AG04450 (cell line): ENCODE measurements at regions of chr5 and their contacts with region 1.

Region 1: GRCh38 chr5:17189381-17190036 is 27.9 kb upstream of the BASP1 start:
- DNase-seq: peak; percentile 58
- H3K4me3 ChIP-seq: no peak overlapping the region
- H3K27ac ChIP-seq: no peak overlapping the region
- H3K27me3 ChIP-seq: no peaks in the 10 kb centered on the region
- CTCF ChIP-seq: peak; percentile 89

Region 2: DNA sequence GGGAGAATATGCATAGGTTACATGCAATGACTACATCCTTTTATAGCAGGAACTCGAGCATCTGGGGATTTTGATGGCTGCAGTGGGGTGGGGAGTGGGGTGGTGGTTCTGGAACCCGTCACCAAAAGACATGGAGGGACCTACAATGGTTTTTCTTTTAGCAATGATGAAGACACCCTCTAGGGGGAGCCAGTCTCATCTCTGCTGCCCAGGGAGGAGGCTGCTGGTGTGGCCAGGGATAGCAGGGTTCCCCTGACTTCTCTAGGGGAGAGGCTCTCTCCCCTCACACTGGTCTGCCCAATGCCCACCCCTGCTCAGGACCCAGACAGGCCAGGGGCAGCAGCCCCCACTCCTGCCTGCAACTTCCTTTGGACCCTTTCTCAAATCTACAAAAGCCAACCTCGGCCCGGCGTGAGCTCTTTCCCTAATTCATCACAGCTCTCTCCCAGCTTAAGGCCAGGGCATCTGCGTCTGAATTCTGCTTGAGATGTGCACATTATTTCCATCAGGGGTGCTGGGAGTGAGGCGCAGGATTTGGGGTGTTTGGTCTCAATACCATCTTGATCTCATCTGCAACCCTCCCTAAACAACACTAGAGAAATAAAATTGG is 499.2 kb before region 1 on chr5:
- CTCF ChIA-PET with region 1: interaction called, 15 read pairs
- POLR2A ChIA-PET with region 1: no interaction called
- DNase-seq: no peak
- H3K4me3 ChIP-seq: no peak overlapping the region
- H3K27ac ChIP-seq: no peak overlapping the region
- H3K27me3 ChIP-seq: no peaks in the 10 kb centered on the region
- CTCF ChIP-seq: peak; percentile 84

Region 3: DNA sequence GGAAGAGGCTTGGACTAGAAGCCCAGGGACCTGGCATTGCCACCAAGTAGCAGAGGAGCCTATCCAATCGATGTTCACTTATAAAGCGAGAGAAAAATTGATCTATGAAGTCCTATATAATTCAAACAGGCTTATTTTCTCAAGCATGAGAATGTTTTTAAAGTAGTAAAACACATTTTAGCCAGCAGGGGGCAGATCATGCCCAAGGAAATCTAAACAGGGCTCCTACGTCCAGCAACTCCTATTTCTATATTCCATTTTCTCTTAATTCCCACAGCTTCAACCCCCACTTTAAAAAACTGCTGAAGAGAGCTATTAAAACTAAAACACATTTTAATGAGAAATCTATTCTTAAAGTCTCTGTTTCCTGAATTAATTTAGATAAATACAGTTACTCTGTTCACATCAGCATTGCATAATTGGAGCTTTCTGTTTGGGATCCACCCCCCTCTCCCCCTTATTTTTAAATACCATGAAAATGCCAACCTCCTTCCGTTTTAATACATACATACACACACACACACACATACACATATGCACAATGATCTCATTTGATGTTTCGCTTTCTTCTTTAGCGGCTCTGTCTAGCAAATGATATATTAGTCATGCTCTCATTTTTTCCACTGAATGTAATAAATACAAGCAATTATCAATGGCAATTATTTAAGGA is 398.3 kb before region 1 on chr5:
- CTCF ChIA-PET with region 1: interaction called, 40 read pairs
- POLR2A ChIA-PET with region 1: no interaction called
- DNase-seq: no peak
- H3K4me3 ChIP-seq: no peak overlapping the region
- H3K27ac ChIP-seq: no peak overlapping the region
- H3K27me3 ChIP-seq: no peaks in the 10 kb centered on the region
- CTCF ChIP-seq: peak; percentile 62

Region 4: DNA sequence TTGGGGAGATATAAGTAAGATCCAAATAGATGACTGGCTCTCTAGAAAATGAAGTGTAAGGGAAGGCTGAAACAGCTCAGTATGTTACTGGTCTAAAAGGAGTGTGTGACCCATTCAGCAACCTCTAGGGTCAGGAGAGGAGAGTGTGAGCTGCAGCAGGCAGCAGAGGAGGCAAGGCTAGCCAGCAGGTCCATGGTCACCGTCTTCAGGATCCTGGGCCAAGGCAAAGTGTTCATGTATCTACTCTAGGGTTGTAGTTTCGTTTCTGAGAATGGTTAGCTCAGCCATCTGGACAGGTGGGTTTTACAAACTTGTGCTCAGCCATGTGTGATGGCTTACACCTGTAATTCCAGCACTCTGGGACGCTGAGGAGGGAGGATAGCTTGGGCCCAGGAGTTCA is 267.1 kb before region 1 on chr5:
- CTCF ChIA-PET with region 1: interaction called, 19 read pairs
- POLR2A ChIA-PET with region 1: no interaction called
- DNase-seq: no peak
- H3K4me3 ChIP-seq: no peak overlapping the region
- H3K27ac ChIP-seq: peak overlapping the region; percentile 21
- H3K27me3 ChIP-seq: no peaks in the 10 kb centered on the region
- CTCF ChIP-seq: no peak

Region 5: GRCh38 chr5:17143335-17143734 is 46.2 kb before region 1 on chr5:
- CTCF ChIA-PET with region 1: interaction called, 10 read pairs
- POLR2A ChIA-PET with region 1: no interaction called
- DNase-seq: peak; percentile 44
- H3K4me3 ChIP-seq: no peak overlapping the region
- H3K27ac ChIP-seq: no peak overlapping the region
- H3K27me3 ChIP-seq: no peaks in the 10 kb centered on the region
- CTCF ChIP-seq: no peak

Region 6: DNA sequence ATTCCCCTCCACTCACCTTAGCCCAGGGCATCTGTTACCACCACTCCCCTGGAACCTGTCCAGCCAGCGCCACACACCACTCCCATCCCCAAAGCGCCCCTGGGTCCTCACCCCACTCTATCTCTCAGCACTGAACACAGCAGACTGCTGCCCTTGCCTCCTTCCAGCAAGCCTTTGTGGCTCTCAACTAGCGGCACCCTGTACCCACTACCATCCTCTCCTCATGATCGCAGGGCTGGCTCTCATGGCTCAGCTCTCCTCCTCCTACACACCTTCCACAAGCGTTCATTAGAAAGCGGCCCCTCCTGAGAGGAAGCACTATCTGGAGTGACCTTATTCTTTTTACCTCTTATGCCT is 14.6 kb after region 1 on chr5:
- CTCF ChIA-PET with region 1: interaction called, 18 read pairs
- POLR2A ChIA-PET with region 1: no interaction called
- DNase-seq: no peak
- H3K4me3 ChIP-seq: no peak overlapping the region
- H3K27ac ChIP-seq: no peak overlapping the region
- H3K27me3 ChIP-seq: no peaks in the 10 kb centered on the region
- CTCF ChIP-seq: no peak

Region 7: DNA sequence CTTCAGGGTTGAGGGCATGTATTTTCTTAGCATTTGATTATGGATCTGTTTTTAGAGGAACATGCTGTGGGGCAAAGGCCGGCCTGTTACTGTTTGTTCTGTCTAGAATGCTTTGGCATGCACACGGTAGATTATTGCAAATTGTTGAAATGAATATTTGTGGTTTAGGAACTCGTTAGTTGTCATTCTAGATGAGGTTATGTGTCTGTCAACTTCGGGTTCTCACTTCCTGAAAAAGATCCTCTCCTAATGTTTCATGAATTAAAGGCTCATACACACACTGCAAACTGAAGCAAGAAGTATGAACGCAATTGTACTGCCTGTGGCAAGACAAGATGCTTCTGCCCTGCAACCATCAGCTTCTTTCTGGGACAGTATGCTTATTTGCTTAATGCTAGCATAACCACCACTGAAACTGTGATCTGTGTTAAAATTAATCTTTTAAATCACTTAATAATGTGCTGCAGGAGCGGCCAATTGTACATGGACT is 127.5 kb after region 1 on chr5:
- CTCF ChIA-PET with region 1: no interaction called
- POLR2A ChIA-PET with region 1: no interaction called
- DNase-seq: no peak
- H3K4me3 ChIP-seq: no peak overlapping the region
- H3K27ac ChIP-seq: peak overlapping the region; percentile 61
- H3K27me3 ChIP-seq: no peaks in the 10 kb centered on the region
- CTCF ChIP-seq: no peak